ENCODE measurements at regions of chr15 and their contacts with region 1.

Region 1: DNA sequence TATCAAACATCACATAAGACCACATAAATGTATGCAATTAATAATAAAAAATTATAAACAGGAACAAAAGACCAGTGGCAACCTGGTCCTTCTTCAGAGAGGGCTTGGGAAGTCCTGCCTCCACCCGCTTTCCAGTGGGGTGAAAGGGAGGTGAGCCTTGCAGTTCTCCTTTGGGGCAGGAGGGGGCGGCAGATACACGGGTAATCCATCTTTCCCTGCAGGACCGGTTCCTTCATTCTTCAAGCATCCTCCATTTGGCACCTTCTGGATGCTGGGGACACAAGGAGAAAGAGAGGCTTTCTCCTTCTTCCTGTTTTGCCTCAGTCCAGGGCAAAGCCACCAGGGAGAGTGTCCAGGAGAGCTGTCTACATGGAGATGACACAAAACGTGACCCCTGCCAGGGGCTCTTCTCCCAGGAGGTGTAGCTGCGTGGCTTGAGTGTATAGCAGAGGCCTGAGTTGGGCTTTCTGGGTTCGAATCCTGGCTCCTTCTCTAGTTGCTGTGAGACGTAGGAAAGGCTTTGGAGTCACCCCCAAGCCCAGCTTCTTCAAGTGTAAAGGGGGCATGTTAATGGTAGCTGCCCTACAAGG is 23.2 kb downstream of the RPLP1 start:
- H3K4me3 ChIP-seq: no peak overlapping the region
- H3K27ac ChIP-seq: no peak overlapping the region
- H3K4me1 ChIP-seq: no peaks in the 10 kb centered on the region
- CTCF ChIP-seq: peak; percentile 80

Region 2: GRCh38 chr15:69462493-69463181 is 13.2 kb before region 1 on chr15:
- CTCF ChIA-PET with region 1: interaction called, 65 read pairs
- POLR2A ChIA-PET with region 1: interaction called, 3 read pairs
- H3K4me3 ChIP-seq: peak overlapping the region; percentile 34
- H3K27ac ChIP-seq: peak overlapping the region; percentile 42
- H3K4me1 ChIP-seq: peaks cover 8% of the 10 kb centered on the region; the same call in 1 of the 2 replicates
- CTCF ChIP-seq: peak; percentile 98

Region 3: GRCh38 chr15:69543681-69544364 is 68.0 kb after region 1 on chr15:
- CTCF ChIA-PET with region 1: interaction called, 10 read pairs
- POLR2A ChIA-PET with region 1: no interaction called
- H3K4me3 ChIP-seq: no peak overlapping the region
- H3K27ac ChIP-seq: no peak overlapping the region
- H3K4me1 ChIP-seq: no peaks in the 10 kb centered on the region
- CTCF ChIP-seq: no peak

Region 4: GRCh38 chr15:69576035-69576526 is 100.2 kb after region 1 on chr15:
- CTCF ChIA-PET with region 1: interaction called, 11 read pairs
- POLR2A ChIA-PET with region 1: no interaction called
- H3K4me3 ChIP-seq: no peak overlapping the region
- H3K27ac ChIP-seq: no peak overlapping the region
- H3K4me1 ChIP-seq: 0 out of 2 replicates have a peak, but pooled peaks cover 3% of the 10 kb centered on the region
- CTCF ChIP-seq: peak; percentile 80